ENCODE measurements at regions of chr13 and their contacts with region 1.

Region 1: GRCh38 chr13:71149498-71150363 is 717.3 kb downstream of the DACH1 start:
- DNase-seq: no peak
- H3K4me3 Mint-ChIP-seq: no peak overlapping the region
- H3K27ac Mint-ChIP-seq: no peak overlapping the region
- H3K4me1 Mint-ChIP-seq: no peaks in the 10 kb centered on the region
- H3K27me3 Mint-ChIP-seq: no peaks in the 10 kb centered on the region

Region 2: DNA sequence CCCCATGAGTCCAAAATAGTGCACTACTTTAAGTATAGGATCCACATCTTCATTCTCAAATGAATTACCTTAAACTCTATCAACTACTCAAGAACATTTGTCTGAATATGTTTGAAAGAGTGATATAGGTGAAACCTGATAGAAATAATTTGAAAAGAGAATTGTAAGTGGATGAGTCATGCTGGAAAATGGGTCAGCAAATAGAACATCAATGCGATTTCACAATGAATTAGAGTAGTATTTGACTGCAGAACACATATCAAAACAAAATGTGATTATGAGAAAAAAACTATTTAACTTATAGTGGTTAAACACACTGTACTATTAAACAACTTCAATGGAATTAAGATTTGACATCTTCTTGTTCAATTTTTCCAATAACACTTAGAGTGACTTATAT is 740.9 kb before region 1 on chr13:
- intact Hi-C with region 1: no loop called
- DNase-seq: no peak
- H3K4me3 Mint-ChIP-seq: no peak overlapping the region
- H3K27ac Mint-ChIP-seq: no peak overlapping the region
- H3K4me1 Mint-ChIP-seq: no peaks in the 10 kb centered on the region
- H3K27me3 Mint-ChIP-seq: no peaks in the 10 kb centered on the region

Region 3: GRCh38 chr13:71169180-71169579 is 19.4 kb after region 1 on chr13:
- intact Hi-C with region 1: loop called (anchors 1 kb)
- DNase-seq: no peak
- H3K4me3 Mint-ChIP-seq: no peak overlapping the region
- H3K27ac Mint-ChIP-seq: no peak overlapping the region
- H3K4me1 Mint-ChIP-seq: no peaks in the 10 kb centered on the region
- H3K27me3 Mint-ChIP-seq: no peaks in the 10 kb centered on the region